ENCODE measurements at regions of chr2 and their contacts with region 1.

Region 1: GRCh38 chr2:160394153-160394552 is 99.5 kb downstream of the RBMS1 start:
- H3K4me3 Mint-ChIP-seq: no peak overlapping the region
- H3K27ac Mint-ChIP-seq: no peak overlapping the region
- H3K4me1 Mint-ChIP-seq: peaks cover 40% of the 10 kb centered on the region
- H3K27me3 Mint-ChIP-seq: no peaks in the 10 kb centered on the region

Region 2: DNA sequence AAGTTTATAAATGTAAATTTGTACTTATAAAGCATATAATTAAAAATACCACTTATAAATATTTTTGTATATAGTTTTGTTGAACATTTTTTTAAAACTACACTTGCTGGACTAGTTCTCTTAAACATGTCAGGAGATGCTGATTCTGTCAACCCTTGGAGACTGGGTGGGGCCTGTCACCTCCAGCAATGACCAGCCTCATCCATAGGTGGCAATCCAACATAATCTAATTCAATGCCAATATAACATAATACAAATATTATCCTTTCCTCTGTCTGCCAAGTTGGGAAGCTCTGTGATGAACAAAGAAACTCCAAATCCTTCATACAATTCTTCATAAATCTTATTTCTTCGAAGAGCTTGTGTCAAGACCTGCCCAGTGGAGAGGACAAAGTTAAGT is 41.0 kb before region 1 on chr2:
- intact Hi-C with region 1: loop called (anchors 5 kb)
- H3K4me3 Mint-ChIP-seq: no peak overlapping the region
- H3K27ac Mint-ChIP-seq: no peak overlapping the region
- H3K4me1 Mint-ChIP-seq: peaks cover 57% of the 10 kb centered on the region
- H3K27me3 Mint-ChIP-seq: no peaks in the 10 kb centered on the region

Region 3: DNA sequence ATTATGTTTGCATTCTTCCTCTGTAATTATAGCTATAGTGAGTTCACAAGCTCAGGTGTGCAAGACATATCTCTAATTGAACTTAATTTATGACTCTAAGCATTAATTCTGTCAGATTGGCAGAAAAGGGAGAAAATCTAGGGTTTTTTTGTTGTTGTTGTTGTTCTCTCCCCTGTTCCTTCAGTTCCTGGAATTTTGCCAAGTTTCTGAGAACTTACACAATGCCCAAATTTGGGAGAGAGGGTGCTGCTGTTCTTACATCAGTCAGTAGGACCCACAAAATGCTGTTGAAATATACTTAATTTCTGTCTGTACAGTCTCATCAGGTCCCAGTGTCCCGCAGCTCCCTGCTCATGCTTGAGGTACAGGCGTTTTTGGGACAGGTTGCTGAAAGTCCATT is 321.3 kb after region 1 on chr2:
- intact Hi-C with region 1: no loop called
- H3K4me3 Mint-ChIP-seq: no peak overlapping the region
- H3K27ac Mint-ChIP-seq: no peak overlapping the region
- H3K4me1 Mint-ChIP-seq: peaks cover 4% of the 10 kb centered on the region
- H3K27me3 Mint-ChIP-seq: peaks cover 1% of the 10 kb centered on the region